K562 (cell line): ENCODE measurements at regions of chr6 and their contacts with region 1.

Region 1: GRCh38 chr6:148177589-148178233 is 164.9 kb upstream of the SASH1 start:
- DNase-seq: peak; percentile 34 to 62 (median 55)
- ATAC-seq: peak; percentile 71
- H3K4me3 ChIP-seq: no peak overlapping the region
- H3K27ac ChIP-seq: no peak overlapping the region
- H3K4me1 ChIP-seq: no peaks in the 10 kb centered on the region; a peak in 1 of 5 replicates
- H3K27me3 ChIP-seq: 0 out of 5 replicates have a peak, but pooled peaks cover 0 to 4% of the 10 kb centered on the region in 2 experiments
- CTCF ChIP-seq: peak; percentile 64 to 74 (median 73)
- EP300 ChIP-seq: no peak
- POLR2A ChIP-seq: no peak
- RAD21 ChIP-seq: peak in 1 of 2 experiments; percentile 59; a peak in 2 of 4 replicates

Region 2: GRCh38 chr6:147986846-147987245 is 190.9 kb before region 1 on chr6:
- CTCF ChIA-PET with region 1: no interaction called
- POLR2A ChIA-PET with region 1: no interaction called
- in situ Hi-C with region 1: no loop called
- intact Hi-C with region 1: loop called (anchors 10 kb)
- DNase-seq: no peak
- ATAC-seq: no peak
- H3K4me3 ChIP-seq: no peak overlapping the region
- H3K27ac ChIP-seq: no peak overlapping the region
- H3K4me1 ChIP-seq: no peaks in the 10 kb centered on the region
- H3K27me3 ChIP-seq: peaks cover 4 to 10% of the 10 kb centered on the region in 2 experiments; a peak in 4 of 5 replicates
- CTCF ChIP-seq: no peak
- EP300 ChIP-seq: no peak
- POLR2A ChIP-seq: no peak
- RAD21 ChIP-seq: no peak

Region 3: DNA sequence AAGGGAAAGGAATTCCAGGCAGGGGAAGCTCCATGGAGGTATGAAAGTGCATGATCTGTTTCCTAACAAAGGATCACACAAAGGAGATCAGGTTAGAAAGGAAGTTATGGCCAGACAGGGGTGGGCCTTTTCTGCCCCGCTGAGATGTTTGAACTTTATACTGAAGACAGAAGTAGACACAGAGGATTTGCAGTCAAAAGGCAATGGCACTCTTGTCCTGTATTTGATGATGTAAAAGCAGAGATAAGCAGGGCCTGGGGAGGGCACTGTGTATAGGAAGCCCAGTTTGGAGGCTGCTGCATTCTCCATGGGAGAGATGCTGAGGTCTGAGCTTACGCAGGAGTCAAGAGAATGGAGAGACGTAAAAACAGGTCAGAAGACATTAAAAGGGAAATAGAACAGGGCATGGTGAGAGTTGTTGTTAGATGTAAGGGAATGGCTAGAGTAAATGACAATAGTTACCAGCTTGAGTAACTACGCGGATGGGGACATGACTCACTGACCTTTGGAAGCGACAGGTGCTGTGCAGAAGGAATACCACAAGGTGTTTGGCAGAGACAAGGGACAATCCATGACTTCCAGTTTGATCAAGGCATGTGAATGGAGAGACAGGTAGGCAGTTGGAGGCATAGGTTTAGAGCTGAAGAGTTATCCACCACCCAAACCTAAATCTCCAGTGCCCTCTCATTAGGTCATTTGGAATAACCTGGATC is 25.6 kb before region 1 on chr6:
- CTCF ChIA-PET with region 1: no interaction called
- POLR2A ChIA-PET with region 1: no interaction called
- in situ Hi-C with region 1: no loop called
- intact Hi-C with region 1: no loop called
- DNase-seq: no peak
- ATAC-seq: no peak
- H3K4me3 ChIP-seq: no peak overlapping the region
- H3K27ac ChIP-seq: no peak overlapping the region
- H3K4me1 ChIP-seq: no peaks in the 10 kb centered on the region
- H3K27me3 ChIP-seq: peaks cover 4 to 9% of the 10 kb centered on the region in 2 experiments; a peak in 3 of 5 replicates
- CTCF ChIP-seq: no peak
- EP300 ChIP-seq: no peak
- POLR2A ChIP-seq: no peak
- RAD21 ChIP-seq: no peak

Region 4: GRCh38 chr6:148250975-148251685 is 73.4 kb after region 1 on chr6:
- CTCF ChIA-PET with region 1: interaction called, 5 read pairs
- POLR2A ChIA-PET with region 1: no interaction called
- in situ Hi-C with region 1: no loop called
- intact Hi-C with region 1: loop called (anchors 2 kb)
- DNase-seq: peak in 1 of 4 experiments; percentile 29
- ATAC-seq: peak; percentile 31; the same call in 1 of the 3 replicates
- H3K4me3 ChIP-seq: no peak overlapping the region
- H3K27ac ChIP-seq: no peak overlapping the region
- H3K4me1 ChIP-seq: no peaks in the 10 kb centered on the region
- H3K27me3 ChIP-seq: peaks cover 4 to 11% of the 10 kb centered on the region in 2 experiments; a peak in 4 of 5 replicates
- CTCF ChIP-seq: peak; percentile 15 to 57 (median 34); a peak in 4 of 6 replicates
- EP300 ChIP-seq: no peak
- POLR2A ChIP-seq: no peak
- RAD21 ChIP-seq: peak; percentile 56 to 60

Region 5: DNA sequence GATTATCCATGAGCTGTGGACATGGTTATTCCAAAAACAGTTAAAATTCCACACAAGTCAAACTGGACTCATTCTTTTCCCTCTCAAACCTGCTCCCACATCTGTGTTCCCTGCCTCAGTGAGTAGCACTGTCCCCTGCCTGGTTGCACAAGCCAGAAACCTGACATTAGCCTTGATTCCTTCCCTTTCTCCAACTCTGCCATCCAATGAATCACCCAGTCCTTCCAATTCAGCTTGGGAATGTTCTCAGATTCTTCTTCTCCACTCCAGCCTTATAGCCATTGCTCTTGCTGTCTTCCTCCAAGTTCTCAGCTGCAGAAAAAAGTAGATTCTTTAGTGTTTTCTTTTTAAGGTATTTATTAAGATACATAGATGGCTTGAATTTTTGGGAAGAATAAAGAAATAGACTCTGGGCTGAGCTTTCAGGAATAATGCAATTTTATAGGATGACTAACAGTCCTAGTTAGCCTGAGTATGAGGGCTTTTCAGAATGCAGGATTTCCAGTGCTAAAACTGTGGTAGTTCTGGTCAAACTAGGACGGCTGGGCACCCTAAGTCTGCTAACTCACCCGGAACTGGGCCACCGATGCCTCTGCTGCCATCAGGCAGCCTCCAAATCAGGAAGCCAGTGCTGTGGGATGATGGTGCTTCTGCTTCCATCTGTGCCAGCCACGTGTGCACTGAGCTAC is 146.7 kb after region 1 on chr6:
- CTCF ChIA-PET with region 1: no interaction called
- POLR2A ChIA-PET with region 1: no interaction called
- in situ Hi-C with region 1: no loop called
- intact Hi-C with region 1: no loop called
- DNase-seq: no peak
- ATAC-seq: no peak
- H3K4me3 ChIP-seq: no peak overlapping the region
- H3K27ac ChIP-seq: no peak overlapping the region
- H3K4me1 ChIP-seq: no peaks in the 10 kb centered on the region
- H3K27me3 ChIP-seq: peaks cover 5 to 25% of the 10 kb centered on the region in 2 experiments; a peak in 4 of 5 replicates
- CTCF ChIP-seq: no peak
- EP300 ChIP-seq: no peak
- POLR2A ChIP-seq: no peak
- RAD21 ChIP-seq: no peak

Region 6: DNA sequence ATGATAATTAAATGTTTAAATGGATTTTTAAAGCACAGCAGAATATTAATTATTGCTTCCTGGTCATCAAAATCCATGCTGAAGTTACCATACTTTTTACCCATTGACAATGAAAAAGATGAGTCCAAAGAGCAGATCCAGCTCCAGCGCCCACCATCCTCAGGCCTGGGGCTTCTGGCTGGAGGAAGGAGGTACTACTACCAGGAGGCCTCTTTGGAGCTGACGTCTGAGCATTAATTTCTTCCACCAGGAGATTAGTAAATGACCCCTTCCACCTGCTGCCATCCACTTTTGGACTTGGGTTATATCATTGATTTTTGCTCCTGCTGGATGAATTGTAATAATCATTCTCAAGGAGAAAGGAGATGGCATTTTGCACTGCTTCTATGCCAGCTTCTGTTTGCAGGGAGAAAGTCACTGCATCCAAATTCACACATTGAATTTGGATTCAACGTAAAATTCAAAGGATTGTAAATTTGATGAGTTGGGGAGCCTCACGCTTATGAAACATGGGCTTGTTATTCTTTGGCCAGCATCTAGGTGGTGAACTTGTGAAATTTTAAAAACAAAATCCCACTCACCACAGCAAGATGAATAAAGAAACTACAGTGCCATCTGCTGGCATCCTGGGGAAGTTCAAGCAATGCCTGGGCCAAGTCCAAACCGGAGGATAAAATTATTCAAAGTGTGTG is 286.8 kb after region 1 on chr6:
- CTCF ChIA-PET with region 1: interaction called, 5 read pairs
- POLR2A ChIA-PET with region 1: no interaction called
- in situ Hi-C with region 1: no loop called
- intact Hi-C with region 1: loop called (anchors 1 kb)
- DNase-seq: peak; percentile 71 to 77 (median 72)
- ATAC-seq: peak; percentile 97
- H3K4me3 ChIP-seq: no peak overlapping the region
- H3K27ac ChIP-seq: no peak overlapping the region
- H3K4me1 ChIP-seq: no peaks in the 10 kb centered on the region
- H3K27me3 ChIP-seq: peaks cover 8 to 13% of the 10 kb centered on the region in 2 experiments; a peak in 3 of 5 replicates
- CTCF ChIP-seq: peak; percentile 91 to 98 (median 94)
- EP300 ChIP-seq: no peak
- POLR2A ChIP-seq: no peak
- RAD21 ChIP-seq: peak; percentile 81 to 85